ENCODE measurements at regions of chrX and their contacts with region 1.

Region 1: DNA sequence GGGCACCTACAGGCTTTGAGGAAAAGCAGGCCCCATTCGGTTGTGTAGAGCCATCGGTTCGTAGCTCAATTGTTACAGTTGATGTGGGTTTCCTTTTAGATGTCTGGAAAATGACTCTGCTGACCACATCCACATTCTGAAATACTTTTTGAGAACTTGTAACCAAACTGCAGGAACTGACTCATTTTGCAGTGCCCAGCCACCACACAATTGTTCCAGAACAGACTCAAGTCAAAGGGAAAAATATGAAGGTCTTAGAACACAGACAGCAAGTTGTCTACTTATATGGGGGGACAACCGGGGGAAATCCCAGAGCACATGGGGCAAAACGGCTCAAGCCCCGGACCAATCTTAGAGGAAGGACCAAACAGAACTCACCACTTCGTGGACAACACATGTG is 557.6 kb upstream of the DIPK2B start:
- DNase-seq: peak; percentile 46
- H3K4me3 Mint-ChIP-seq: peak overlapping the region; percentile 77
- H3K27ac Mint-ChIP-seq: peak overlapping the region; percentile 96
- H3K4me1 Mint-ChIP-seq: peaks cover 72% of the 10 kb centered on the region
- H3K27me3 Mint-ChIP-seq: no peaks in the 10 kb centered on the region

Region 2: GRCh38 chrX:45515262-45516215 is 242.8 kb before region 1 on chrX:
- intact Hi-C with region 1: loop called (anchors 2 kb)
- DNase-seq: peak; percentile 1
- H3K4me3 Mint-ChIP-seq: no peak overlapping the region
- H3K27ac Mint-ChIP-seq: peak overlapping the region; percentile 65
- H3K4me1 Mint-ChIP-seq: peaks cover 25% of the 10 kb centered on the region
- H3K27me3 Mint-ChIP-seq: no peaks in the 10 kb centered on the region

Region 3: GRCh38 chrX:45710081-45710801 is 48.1 kb before region 1 on chrX:
- intact Hi-C with region 1: loop called (anchors 1 kb)
- DNase-seq: peak; percentile 16
- H3K4me3 Mint-ChIP-seq: peak overlapping the region; percentile 11
- H3K27ac Mint-ChIP-seq: peak overlapping the region; percentile 90
- H3K4me1 Mint-ChIP-seq: peaks cover 45% of the 10 kb centered on the region
- H3K27me3 Mint-ChIP-seq: no peaks in the 10 kb centered on the region

Region 4: GRCh38 chrX:45769761-45770582 is 11.7 kb after region 1 on chrX:
- intact Hi-C with region 1: loop called (anchors 1 kb)
- DNase-seq: peak; percentile 6
- H3K4me3 Mint-ChIP-seq: peak overlapping the region; percentile 98
- H3K27ac Mint-ChIP-seq: peak overlapping the region; percentile 98
- H3K4me1 Mint-ChIP-seq: peaks cover 59% of the 10 kb centered on the region
- H3K27me3 Mint-ChIP-seq: no peaks in the 10 kb centered on the region

Region 5: GRCh38 chrX:45806410-45807121 is 48.2 kb after region 1 on chrX:
- intact Hi-C with region 1: loop called (anchors 1 kb)
- DNase-seq: peak; percentile 41
- H3K4me3 Mint-ChIP-seq: peak overlapping the region; percentile 66
- H3K27ac Mint-ChIP-seq: peak overlapping the region; percentile 96
- H3K4me1 Mint-ChIP-seq: peaks cover 93% of the 10 kb centered on the region
- H3K27me3 Mint-ChIP-seq: peaks cover 3% of the 10 kb centered on the region

Region 6: GRCh38 chrX:46325312-46325877 is 567.1 kb after region 1 on chrX:
- intact Hi-C with region 1: loop called (anchors 10 kb)
- DNase-seq: no peak
- H3K4me3 Mint-ChIP-seq: no peak overlapping the region
- H3K27ac Mint-ChIP-seq: peak overlapping the region; percentile 65
- H3K4me1 Mint-ChIP-seq: peaks cover 49% of the 10 kb centered on the region
- H3K27me3 Mint-ChIP-seq: no peaks in the 10 kb centered on the region